Naive thymus-derived CD8-positive, alpha-beta T cell (primary cell): ENCODE measurements at regions of chr11 and their contacts with region 1.

Region 1: DNA sequence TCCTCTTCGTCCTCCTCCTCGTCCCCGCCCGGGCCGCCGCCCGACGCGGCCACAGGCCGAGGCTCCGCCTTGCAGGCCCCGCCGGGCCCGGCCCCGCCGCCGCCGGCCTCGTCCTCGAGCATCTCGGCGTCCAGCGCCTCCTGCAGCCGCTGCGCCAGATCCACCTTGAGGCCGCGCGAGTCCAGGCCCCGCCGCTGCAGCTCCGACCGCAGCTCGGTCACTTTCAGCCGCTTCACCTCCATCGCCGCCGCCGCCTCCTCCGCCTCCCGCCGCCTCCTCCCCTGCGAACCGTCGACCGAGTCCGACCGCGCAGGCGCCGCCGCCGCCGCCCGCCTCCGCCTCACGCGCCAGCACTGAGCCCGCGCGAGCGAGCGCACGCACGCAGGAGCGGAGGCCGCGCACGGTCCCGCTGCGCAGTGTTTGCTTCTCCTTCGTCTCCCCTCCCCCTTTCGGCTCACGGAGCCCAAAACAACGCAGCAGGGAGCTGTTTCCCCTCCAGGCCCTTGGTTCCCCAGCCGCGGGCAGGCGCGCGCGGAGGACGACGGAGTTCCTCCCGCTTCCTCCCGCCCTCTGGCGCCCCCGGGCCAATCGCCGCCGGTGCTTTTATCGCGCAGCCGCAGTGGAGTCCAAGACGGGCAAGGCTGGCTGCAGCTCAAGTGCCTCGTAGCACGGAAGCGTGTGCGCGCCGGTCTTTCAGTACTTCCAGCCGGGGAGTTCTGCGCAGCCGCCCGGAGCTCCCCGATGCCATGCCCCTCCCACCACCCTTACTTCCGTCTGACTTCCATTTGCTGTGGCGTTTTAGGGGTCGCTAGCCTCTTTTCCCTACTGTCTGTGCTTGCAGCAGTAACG is at the start of gene HNRNPUL2:
- DNase-seq: peak; percentile 98 to 99 (median 99)
- ATAC-seq: peak; percentile 79 to 81
- H3K4me3 Mint-ChIP-seq: peak within 1 kb of the TSS; percentile 92 to 99 (median 96)
- H3K27ac Mint-ChIP-seq: peak within 1 kb of the TSS; percentile 90 to 100 (median 99)
- H3K4me1 Mint-ChIP-seq: peaks cover 25 to 66% (median 53%) of the 10 kb centered on the region in 4 donors
- H3K27me3 Mint-ChIP-seq: peaks cover 0 to 2% (median 0%) of the 10 kb centered on the region in 5 donors
- polyA plus RNA-seq, gene HNRNPUL2: 0.99 to 3.0 (median 1.0) TPM

Region 2: GRCh38 chr11:62256281-62256680 is 470.9 kb before region 1 on chr11:
- POLR2A ChIA-PET with region 1: no interaction called
- DNase-seq: no peak
- ATAC-seq: no peak
- H3K4me3 Mint-ChIP-seq: no peak overlapping the region
- H3K27ac Mint-ChIP-seq: no peak overlapping the region
- H3K4me1 Mint-ChIP-seq: no peaks in the 10 kb centered on the region
- H3K27me3 Mint-ChIP-seq: peaks cover 3 to 24% (median 5%) of the 10 kb centered on the region in 5 donors

Region 3: GRCh38 chr11:62514151-62514550 is 213.0 kb before region 1 on chr11:
- POLR2A ChIA-PET with region 1: no interaction called
- DNase-seq: no peak
- ATAC-seq: peak in 1 of 2 donors; percentile 15
- H3K4me3 Mint-ChIP-seq: peak overlapping the region in 1 of 10 donors; percentile 45
- H3K27ac Mint-ChIP-seq: peak overlapping the region in 1 of 10 donors; percentile 28
- H3K4me1 Mint-ChIP-seq: peaks cover 0 to 7% (median 4%) of the 10 kb centered on the region in 4 donors
- H3K27me3 Mint-ChIP-seq: no peaks in the 10 kb centered on the region

Region 4: GRCh38 chr11:62556108-62556871 is 170.8 kb before region 1 on chr11:
- POLR2A ChIA-PET with region 1: interaction called, 13 read pairs
- DNase-seq: peak; percentile 57 to 94 (median 80)
- ATAC-seq: peak; percentile 50 to 56
- H3K4me3 Mint-ChIP-seq: peak overlapping the region; percentile 61 to 90 (median 86)
- H3K27ac Mint-ChIP-seq: peak overlapping the region; percentile 97 to 100 (median 99)
- H3K4me1 Mint-ChIP-seq: peaks cover 50 to 98% (median 88%) of the 10 kb centered on the region in 4 donors
- H3K27me3 Mint-ChIP-seq: peaks cover 0 to 2% (median 0%) of the 10 kb centered on the region in 5 donors

Region 5: GRCh38 chr11:62621567-62622470 is 105.3 kb before region 1 on chr11 and contains the start of gene B3GAT3:
- POLR2A ChIA-PET with region 1: interaction called, 13 read pairs
- DNase-seq: peak; percentile 87 to 98 (median 95)
- ATAC-seq: peak; percentile 83 to 85
- H3K4me3 Mint-ChIP-seq: peak within 1 kb of the TSS; percentile 86 to 97 (median 94)
- H3K27ac Mint-ChIP-seq: peak within 1 kb of the TSS; percentile 92 to 99 (median 98)
- H3K4me1 Mint-ChIP-seq: peaks cover 13 to 36% (median 32%) of the 10 kb centered on the region in 4 donors
- H3K27me3 Mint-ChIP-seq: peaks cover 0 to 2% (median 0%) of the 10 kb centered on the region in 5 donors
- polyA plus RNA-seq, gene B3GAT3: 35.6 to 51.3 (median 40.3) TPM

Region 6: DNA sequence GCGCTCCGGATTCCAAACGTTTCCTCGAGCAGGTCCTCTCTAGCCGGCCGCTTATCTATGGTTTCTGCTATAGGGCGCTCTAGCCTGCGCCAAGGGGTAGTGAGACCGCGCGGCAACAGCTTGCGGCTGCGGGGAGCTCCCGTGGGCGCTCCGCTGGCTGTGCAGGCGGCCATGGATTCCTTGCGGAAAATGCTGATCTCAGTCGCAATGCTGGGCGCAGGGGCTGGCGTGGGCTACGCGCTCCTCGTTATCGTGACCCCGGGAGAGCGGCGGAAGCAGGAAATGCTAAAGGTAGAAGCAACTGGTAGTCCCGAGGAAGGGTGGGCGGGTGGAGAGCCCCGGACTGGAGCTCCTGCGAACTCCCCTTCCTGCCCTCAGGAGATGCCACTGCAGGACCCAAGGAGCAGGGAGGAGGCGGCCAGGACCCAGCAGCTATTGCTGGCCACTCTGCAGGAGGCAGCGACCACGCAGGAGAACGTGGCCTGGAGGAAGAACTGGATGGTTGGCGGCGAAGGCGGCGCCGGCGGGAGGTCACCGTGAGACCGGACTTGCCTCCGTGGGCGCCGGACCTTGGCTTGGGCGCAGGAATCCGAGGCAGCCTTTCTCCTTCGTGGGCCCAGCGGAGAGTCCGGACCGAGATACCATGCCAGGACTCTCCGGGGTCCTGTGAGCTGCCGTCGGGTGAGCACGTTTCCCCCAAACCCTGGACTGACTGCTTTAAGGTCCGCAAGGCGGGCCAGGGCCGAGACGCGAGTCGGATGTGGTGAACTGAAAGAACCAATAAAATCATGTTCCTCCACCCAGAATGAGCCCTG is 55.4 kb before region 1 on chr11 and contains the starts of genes LBHD1 and UQCC3:
- POLR2A ChIA-PET with region 1: interaction called, 38 read pairs
- DNase-seq: peak; percentile 52 to 85 (median 68)
- ATAC-seq: peak; percentile 75 to 76
- H3K4me3 Mint-ChIP-seq: peak within 1 kb of the TSS; percentile 96 to 100 (median 98)
- H3K27ac Mint-ChIP-seq: peak within 1 kb of the TSS; percentile 92 to 99 (median 96)
- H3K4me1 Mint-ChIP-seq: peaks cover 22 to 67% (median 50%) of the 10 kb centered on the region in 4 donors
- H3K27me3 Mint-ChIP-seq: no peaks in the 10 kb centered on the region
- polyA plus RNA-seq, gene LBHD1: 2.4 to 8.3 (median 4.4) TPM
- polyA plus RNA-seq, gene UQCC3: 9.1 to 9.7 (median 9.6) TPM

Region 7: GRCh38 chr11:62771144-62772021 is 44.2 kb after region 1 on chr11 and contains the start of gene TAF6L:
- POLR2A ChIA-PET with region 1: interaction called, 75 read pairs
- DNase-seq: peak; percentile 78 to 93 (median 83)
- ATAC-seq: peak; percentile 82 to 94
- H3K4me3 Mint-ChIP-seq: peak within 1 kb of the TSS; percentile 84 to 99 (median 96)
- H3K27ac Mint-ChIP-seq: peak within 1 kb of the TSS; percentile 89 to 98 (median 96)
- H3K4me1 Mint-ChIP-seq: peaks cover 15 to 34% (median 32%) of the 10 kb centered on the region in 4 donors
- H3K27me3 Mint-ChIP-seq: no peaks in the 10 kb centered on the region
- polyA plus RNA-seq, gene TAF6L: 8.7 to 10.8 (median 8.9) TPM

Region 8: DNA sequence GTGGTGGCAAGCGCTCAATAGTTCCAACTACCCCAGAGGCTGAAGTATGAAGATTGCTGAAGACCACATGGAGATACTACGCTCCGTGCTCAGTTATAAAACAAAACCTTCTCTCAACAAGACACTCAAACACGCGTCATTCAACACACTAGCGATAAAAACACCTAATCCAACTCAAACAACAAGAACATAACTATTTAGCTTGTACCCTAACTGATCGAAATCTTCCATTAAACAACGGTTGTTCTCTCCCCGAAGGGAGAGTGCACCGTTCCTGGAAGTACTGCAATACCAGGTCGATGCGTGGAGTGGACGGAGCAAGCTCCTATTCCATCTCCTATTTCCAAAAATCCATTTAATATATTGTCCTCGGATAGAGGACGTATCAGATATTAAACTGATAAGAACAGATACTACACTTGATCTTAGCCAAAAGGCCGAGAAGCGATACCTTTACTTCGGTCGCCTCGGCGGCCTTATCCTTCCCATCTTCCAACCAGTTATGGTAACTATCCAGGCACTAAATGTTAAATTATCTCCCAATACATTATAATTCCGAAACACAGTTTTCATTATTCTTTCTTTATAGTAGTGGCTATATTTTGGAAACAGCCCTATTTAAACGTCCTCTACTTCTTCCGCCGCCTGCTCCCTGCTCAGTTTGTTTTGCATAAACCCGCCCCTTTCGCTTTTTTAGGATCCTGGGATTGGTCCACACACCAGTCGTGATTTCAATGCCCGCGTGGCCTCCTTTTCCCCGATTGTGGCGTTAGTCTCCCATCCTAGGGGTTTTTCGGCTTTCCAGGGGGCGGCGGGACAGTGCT is 114.4 kb after region 1 on chr11:
- POLR2A ChIA-PET with region 1: interaction called, 135 read pairs
- DNase-seq: peak; percentile 54 to 94 (median 86)
- ATAC-seq: peak; percentile 57 to 61
- H3K4me3 Mint-ChIP-seq: no peak overlapping the region
- H3K27ac Mint-ChIP-seq: no peak overlapping the region
- H3K4me1 Mint-ChIP-seq: peaks cover 13 to 31% (median 25%) of the 10 kb centered on the region in 4 donors
- H3K27me3 Mint-ChIP-seq: no peaks in the 10 kb centered on the region

Region 9: GRCh38 chr11:62889484-62890437 is 162.6 kb after region 1 on chr11:
- POLR2A ChIA-PET with region 1: no interaction called
- DNase-seq: no peak
- ATAC-seq: peak; percentile 28 to 32
- H3K4me3 Mint-ChIP-seq: peak overlapping the region in 1 of 10 donors; percentile 17
- H3K27ac Mint-ChIP-seq: peak overlapping the region in 8 of 10 donors; percentile 8 to 87 (median 59)
- H3K4me1 Mint-ChIP-seq: peaks cover 8 to 16% (median 13%) of the 10 kb centered on the region in 4 donors
- H3K27me3 Mint-ChIP-seq: peaks cover 0 to 2% (median 0%) of the 10 kb centered on the region in 5 donors

Region 10: GRCh38 chr11:64341851-64342791 is 1615.0 kb after region 1 on chr11:
- POLR2A ChIA-PET with region 1: no interaction called
- DNase-seq: peak; percentile 76 to 88 (median 85)
- ATAC-seq: peak; percentile 51 to 54
- H3K4me3 Mint-ChIP-seq: peak overlapping the region in 9 of 10 donors; percentile 32 to 92 (median 85)
- H3K27ac Mint-ChIP-seq: peak overlapping the region in 5 of 10 donors; percentile 29 to 75 (median 52)
- H3K4me1 Mint-ChIP-seq: peaks cover 23 to 60% (median 50%) of the 10 kb centered on the region in 4 donors
- H3K27me3 Mint-ChIP-seq: no peaks in the 10 kb centered on the region